ENCODE measurements at regions of chr18 and their contacts with region 1.

Region 1: DNA sequence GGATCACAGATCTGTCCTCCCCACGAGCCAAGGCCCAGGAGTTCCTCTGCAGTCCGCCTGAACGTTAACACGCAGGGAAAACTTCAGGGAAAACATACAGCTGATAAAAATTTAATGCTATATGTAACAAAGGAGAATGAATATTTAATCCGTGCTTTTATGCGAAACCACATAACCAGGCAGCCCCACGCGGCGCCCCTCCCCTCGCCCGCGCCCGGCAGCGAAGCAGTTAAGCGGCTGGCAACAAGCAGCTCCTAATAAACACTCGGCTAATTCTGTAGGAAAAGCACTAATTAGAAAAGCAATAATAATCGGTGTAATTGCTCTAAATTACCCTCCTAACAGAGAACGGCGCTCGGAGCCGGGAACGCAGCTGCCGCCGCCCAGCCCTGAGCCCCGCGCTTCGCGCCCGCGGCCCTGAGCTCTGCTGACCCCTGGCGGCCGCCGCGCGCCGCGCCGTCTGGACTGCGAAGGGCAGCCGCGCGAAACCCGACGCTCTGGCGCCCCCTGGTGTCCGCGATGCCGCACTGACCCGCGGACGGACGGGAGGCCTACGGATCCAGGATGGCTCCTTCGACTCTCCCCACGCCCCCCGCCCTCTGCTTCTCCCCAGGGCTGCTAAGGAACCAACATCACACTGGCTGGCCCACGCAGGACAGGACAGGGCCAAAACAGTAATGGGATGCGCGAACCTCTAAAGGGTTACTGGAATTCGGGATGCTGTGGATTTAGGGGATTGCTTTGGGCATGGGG is 181.4 kb downstream of the SMAD2 start:
- DNase-seq: peak; percentile 73
- H3K4me3 ChIP-seq: peak overlapping the region in 1 of 3 experiments; percentile 46
- H3K27ac ChIP-seq: no peak overlapping the region
- H3K4me1 ChIP-seq: no peaks in the 10 kb centered on the region
- H3K27me3 ChIP-seq: no peaks in the 10 kb centered on the region
- CTCF ChIP-seq: peak; percentile 94 to 100
- POLR2A ChIP-seq: no peak

Region 2: GRCh38 chr18:47050468-47050867 is 698.6 kb before region 1 on chr18:
- CTCF ChIA-PET with region 1: interaction called, 47 read pairs
- POLR2A ChIA-PET with region 1: no interaction called
- dilution Hi-C with region 1: no loop called
- intact Hi-C with region 1: loop called (anchors 1 kb)
- DNase-seq: peak; percentile 51
- H3K4me3 ChIP-seq: no peak overlapping the region
- H3K27ac ChIP-seq: no peak overlapping the region
- H3K4me1 ChIP-seq: no peaks in the 10 kb centered on the region
- H3K27me3 ChIP-seq: peaks cover 0 to 3% of the 10 kb centered on the region in 2 experiments
- CTCF ChIP-seq: peak; percentile 32 to 54
- POLR2A ChIP-seq: no peak

Region 3: GRCh38 chr18:47215554-47216138 is 533.4 kb before region 1 on chr18:
- CTCF ChIA-PET with region 1: interaction called, 70 read pairs
- POLR2A ChIA-PET with region 1: no interaction called
- dilution Hi-C with region 1: no loop called
- intact Hi-C with region 1: loop called (anchors 1 kb)
- DNase-seq: peak; percentile 47
- H3K4me3 ChIP-seq: no peak overlapping the region
- H3K27ac ChIP-seq: no peak overlapping the region
- H3K4me1 ChIP-seq: no peaks in the 10 kb centered on the region
- H3K27me3 ChIP-seq: peaks cover 11 to 13% of the 10 kb centered on the region in 2 experiments
- CTCF ChIP-seq: peak; percentile 23 to 32
- POLR2A ChIP-seq: no peak

Region 4: GRCh38 chr18:47397671-47398319 is 351.2 kb before region 1 on chr18:
- CTCF ChIA-PET with region 1: no interaction called
- POLR2A ChIA-PET with region 1: no interaction called
- dilution Hi-C with region 1: no loop called
- intact Hi-C with region 1: loop called (anchors 1 kb)
- DNase-seq: no peak
- H3K4me3 ChIP-seq: no peak overlapping the region
- H3K27ac ChIP-seq: no peak overlapping the region
- H3K4me1 ChIP-seq: no peaks in the 10 kb centered on the region
- H3K27me3 ChIP-seq: no peaks in the 10 kb centered on the region
- CTCF ChIP-seq: peak in 1 of 2 donors; percentile 22
- POLR2A ChIP-seq: no peak

Region 5: GRCh38 chr18:47490882-47491281 is 258.1 kb before region 1 on chr18:
- CTCF ChIA-PET with region 1: no interaction called
- POLR2A ChIA-PET with region 1: no interaction called
- dilution Hi-C with region 1: no loop called
- intact Hi-C with region 1: no loop called
- DNase-seq: peak; percentile 6
- H3K4me3 ChIP-seq: no peak overlapping the region
- H3K27ac ChIP-seq: no peak overlapping the region
- H3K4me1 ChIP-seq: no peaks in the 10 kb centered on the region
- H3K27me3 ChIP-seq: no peaks in the 10 kb centered on the region
- CTCF ChIP-seq: no peak
- POLR2A ChIP-seq: no peak

Region 6: GRCh38 chr18:47737956-47738355 is 11.1 kb before region 1 on chr18:
- CTCF ChIA-PET with region 1: interaction called, 26 read pairs
- POLR2A ChIA-PET with region 1: no interaction called
- dilution Hi-C with region 1: no loop called
- intact Hi-C with region 1: no loop called
- DNase-seq: no peak
- H3K4me3 ChIP-seq: no peak overlapping the region
- H3K27ac ChIP-seq: no peak overlapping the region
- H3K4me1 ChIP-seq: no peaks in the 10 kb centered on the region
- H3K27me3 ChIP-seq: no peaks in the 10 kb centered on the region
- CTCF ChIP-seq: no peak
- POLR2A ChIP-seq: no peak